ENCODE measurements at regions of chr10 and their contacts with region 1.

Region 1: DNA sequence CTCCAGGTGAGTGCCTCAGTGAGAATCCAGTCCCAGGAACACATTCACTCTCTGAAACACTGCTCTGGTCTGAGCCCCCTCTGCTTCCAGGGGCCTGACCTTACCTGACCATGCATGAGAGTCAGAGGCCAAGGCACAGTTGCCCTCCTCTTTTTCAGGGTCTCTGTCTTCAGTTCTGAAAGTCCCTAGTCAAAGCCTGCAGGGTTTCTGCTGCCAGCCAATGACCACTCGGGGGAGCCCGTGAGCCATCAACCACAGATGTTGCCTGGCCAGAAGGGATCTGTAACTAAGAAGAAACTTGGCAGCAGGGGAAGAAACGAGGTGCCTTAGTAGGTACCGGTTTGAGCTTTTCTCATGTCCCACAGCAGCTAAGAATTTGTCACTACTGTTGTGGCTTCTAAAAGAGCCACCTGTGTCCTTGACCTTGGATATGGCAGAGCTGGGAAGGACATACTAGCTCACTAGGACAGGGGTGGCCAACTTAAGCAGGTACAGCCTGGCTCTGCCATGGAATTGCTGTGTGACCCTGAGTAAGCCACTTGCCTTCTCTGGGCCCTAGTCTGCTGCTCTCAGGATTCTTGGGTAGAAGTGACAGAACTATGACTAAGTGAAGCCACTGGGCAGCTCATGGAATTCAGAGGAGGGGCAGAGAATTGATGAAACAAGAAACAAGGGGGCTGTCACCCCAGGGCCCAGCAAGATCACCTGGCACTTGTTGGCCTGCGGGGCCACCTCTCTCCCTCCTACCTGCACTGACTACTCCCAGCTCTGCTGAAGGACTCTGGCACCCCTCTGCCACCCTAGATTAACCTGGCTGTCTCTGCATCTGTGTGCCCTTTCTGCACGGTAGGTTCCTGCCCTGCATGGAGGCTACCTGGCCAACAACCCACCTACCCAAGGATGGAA is 83.8 kb upstream of the GPR26 start:
- DNase-seq: peak; percentile 68
- ATAC-seq: peak; percentile 86
- H3K4me3 ChIP-seq: no peak overlapping the region
- H3K27ac ChIP-seq: no peak overlapping the region
- H3K4me1 ChIP-seq: peaks cover 0 to 3% of the 10 kb centered on the region in 2 experiments; a peak in 2 of 4 replicates
- H3K27me3 ChIP-seq: peaks cover 51% of the 10 kb centered on the region
- CTCF ChIP-seq: peak; percentile 94 to 99 (median 99)
- POLR2A ChIP-seq: no peak
- RAD21 ChIP-seq: peak; percentile 96

Region 2: GRCh38 chr10:123642293-123642692 is 60.0 kb after region 1 on chr10:
- CTCF ChIA-PET with region 1: no interaction called
- POLR2A ChIA-PET with region 1: no interaction called
- RAD21 ChIA-PET with region 1: no interaction called
- intact Hi-C with region 1: loop called (anchors 5 kb)
- DNase-seq: no peak
- ATAC-seq: no peak; the same call in 1 of the 2 replicates
- H3K4me3 ChIP-seq: no peak overlapping the region
- H3K27ac ChIP-seq: no peak overlapping the region
- H3K4me1 ChIP-seq: peaks cover under 1 to 14% of the 10 kb centered on the region in 2 experiments; a peak in 3 of 4 replicates
- H3K27me3 ChIP-seq: peaks cover 29% of the 10 kb centered on the region
- CTCF ChIP-seq: no peak
- POLR2A ChIP-seq: no peak
- RAD21 ChIP-seq: no peak

Region 3: GRCh38 chr10:123663522-123663921 is 81.2 kb after region 1 on chr10:
- CTCF ChIA-PET with region 1: interaction called, 20 read pairs
- POLR2A ChIA-PET with region 1: no interaction called
- RAD21 ChIA-PET with region 1: no interaction called
- intact Hi-C with region 1: loop called (anchors 1 kb)
- DNase-seq: no peak
- ATAC-seq: peak; percentile 65; the same call in 1 of the 2 replicates
- H3K4me3 ChIP-seq: no peak overlapping the region
- H3K27ac ChIP-seq: no peak overlapping the region
- H3K4me1 ChIP-seq: no peaks in the 10 kb centered on the region
- H3K27me3 ChIP-seq: peaks cover 34% of the 10 kb centered on the region; the same call in 1 of the 2 replicates
- CTCF ChIP-seq: peak in 2 of 3 experiments; percentile 54 to 65; a peak in 4 of 6 replicates
- POLR2A ChIP-seq: no peak
- RAD21 ChIP-seq: peak; percentile 77

Region 4: GRCh38 chr10:123870260-123870659 is 287.9 kb after region 1 on chr10:
- CTCF ChIA-PET with region 1: no interaction called
- POLR2A ChIA-PET with region 1: no interaction called
- RAD21 ChIA-PET with region 1: no interaction called
- intact Hi-C with region 1: loop called (anchors 2 kb)
- DNase-seq: no peak
- ATAC-seq: no peak
- H3K4me3 ChIP-seq: no peak overlapping the region
- H3K27ac ChIP-seq: no peak overlapping the region
- H3K4me1 ChIP-seq: no peaks in the 10 kb centered on the region; a peak in 1 of 4 replicates
- H3K27me3 ChIP-seq: peaks cover 40% of the 10 kb centered on the region
- CTCF ChIP-seq: no peak
- POLR2A ChIP-seq: no peak
- RAD21 ChIP-seq: no peak

Region 5: DNA sequence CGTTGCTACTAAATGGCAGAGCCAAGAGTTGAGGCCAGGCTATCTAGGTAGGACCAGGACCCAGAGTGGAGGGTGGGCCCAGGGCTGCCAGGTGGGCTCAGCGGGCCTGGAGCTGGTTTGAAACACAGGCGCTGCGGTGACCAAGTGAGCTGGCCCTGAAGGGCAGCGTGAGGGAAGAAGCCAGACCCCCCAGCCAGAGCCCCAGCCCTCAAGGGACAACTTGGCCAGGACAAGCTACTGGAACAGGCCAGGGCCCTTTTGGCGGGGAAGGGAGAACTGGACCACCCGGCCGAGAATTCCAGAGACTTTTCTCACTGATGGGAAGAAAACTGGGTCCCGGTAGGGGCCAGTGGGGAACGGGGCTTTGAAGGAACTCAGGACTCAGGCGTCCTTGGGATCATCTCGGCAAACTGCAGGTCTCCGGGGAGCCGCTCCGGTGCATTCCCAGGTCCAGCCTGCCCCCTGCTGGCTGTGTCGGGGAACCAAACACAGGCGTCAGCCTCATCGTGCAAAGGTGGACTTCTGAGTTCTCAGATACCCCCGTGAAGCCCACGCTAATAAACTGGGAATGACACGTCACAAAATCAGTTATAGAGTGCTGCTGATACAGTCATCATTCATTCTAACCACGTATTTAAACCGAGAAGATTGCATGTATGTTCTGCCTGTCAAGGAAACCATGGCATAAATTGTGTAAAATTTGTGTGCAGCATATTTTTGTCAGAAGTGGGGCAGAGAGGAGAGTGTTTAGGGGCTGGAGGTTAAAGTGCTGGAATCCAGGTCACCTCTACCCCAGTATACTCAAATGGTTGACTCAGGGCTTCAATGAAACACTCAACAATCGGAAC is 385.3 kb after region 1 on chr10:
- CTCF ChIA-PET with region 1: interaction called, 25 read pairs
- POLR2A ChIA-PET with region 1: no interaction called
- RAD21 ChIA-PET with region 1: interaction called in 1 of 2 experiments, 3 read pairs
- intact Hi-C with region 1: loop called (anchors 1 kb)
- DNase-seq: peak; percentile 49
- ATAC-seq: peak; percentile 96
- H3K4me3 ChIP-seq: no peak overlapping the region
- H3K27ac ChIP-seq: no peak overlapping the region
- H3K4me1 ChIP-seq: peaks cover 0 to 10% of the 10 kb centered on the region in 2 experiments; a peak in 1 of 4 replicates
- H3K27me3 ChIP-seq: peaks cover 21% of the 10 kb centered on the region
- CTCF ChIP-seq: peak; percentile 96 to 99 (median 99)
- POLR2A ChIP-seq: no peak
- RAD21 ChIP-seq: peak; percentile 99

Measured in HCT116 (cell line).